A673 (cell line): ENCODE measurements at regions of chr12 and their contacts with region 1.

Region 1: DNA sequence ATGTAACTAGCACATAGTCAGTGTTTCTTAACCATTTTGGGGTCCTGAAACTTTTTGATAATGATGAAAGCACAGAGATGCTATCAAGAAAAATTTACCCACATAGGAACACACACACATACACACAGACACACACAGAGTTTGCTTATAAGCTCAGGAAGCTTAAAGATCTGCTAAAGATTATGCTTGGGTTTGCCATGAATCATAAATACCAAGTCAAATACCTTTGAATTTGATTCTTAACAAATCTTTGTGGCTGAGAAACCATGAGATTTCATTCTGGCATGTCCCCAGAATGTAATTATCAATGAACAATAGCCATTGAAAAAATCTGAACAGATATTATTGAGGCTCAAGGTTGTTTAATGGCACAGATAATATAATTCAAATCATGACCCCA is 89.2 kb downstream of the NTS start:
- DNase-seq: no peak
- H3K4me3 ChIP-seq: no peak overlapping the region
- H3K27ac ChIP-seq: no peak overlapping the region
- H3K4me1 ChIP-seq: no peaks in the 10 kb centered on the region
- H3K27me3 ChIP-seq: no peaks in the 10 kb centered on the region
- CTCF ChIP-seq: no peak

Region 2: GRCh38 chr12:85759091-85759490 is 204.2 kb before region 1 on chr12:
- CTCF ChIA-PET with region 1: interaction called, 14 read pairs
- POLR2A ChIA-PET with region 1: no interaction called
- intact Hi-C with region 1: no loop called
- DNase-seq: no peak
- H3K4me3 ChIP-seq: no peak overlapping the region
- H3K27ac ChIP-seq: no peak overlapping the region
- H3K4me1 ChIP-seq: no peaks in the 10 kb centered on the region
- H3K27me3 ChIP-seq: no peaks in the 10 kb centered on the region
- CTCF ChIP-seq: no peak

Region 3: DNA sequence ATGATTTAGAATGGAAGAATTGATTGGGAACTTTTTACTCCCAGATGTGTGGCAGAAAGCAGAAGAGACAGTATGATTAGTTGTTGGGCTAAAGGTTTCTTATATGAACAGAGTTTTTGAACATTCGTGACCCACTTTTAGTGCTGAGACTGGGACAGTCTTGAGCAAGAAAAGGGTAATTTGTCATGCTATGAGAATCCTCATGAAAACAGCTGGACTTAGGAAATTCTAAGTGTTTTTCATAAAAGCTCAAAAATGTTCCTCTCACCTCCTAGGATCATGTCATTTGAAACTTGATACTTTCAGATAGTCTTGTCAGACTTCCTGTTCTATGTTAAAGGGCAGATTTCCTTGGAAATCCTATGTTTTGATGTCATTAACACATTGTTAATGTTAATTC is 206.7 kb after region 1 on chr12:
- CTCF ChIA-PET with region 1: no interaction called
- POLR2A ChIA-PET with region 1: no interaction called
- intact Hi-C with region 1: loop called (anchors 10 kb)
- DNase-seq: peak; percentile 54
- H3K4me3 ChIP-seq: no peak overlapping the region
- H3K27ac ChIP-seq: peak overlapping the region; percentile 49
- H3K4me1 ChIP-seq: peaks cover 30% of the 10 kb centered on the region
- H3K27me3 ChIP-seq: no peaks in the 10 kb centered on the region
- CTCF ChIP-seq: no peak